ENCODE measurements at regions of chr12 and their contacts with region 1.

Region 1: DNA sequence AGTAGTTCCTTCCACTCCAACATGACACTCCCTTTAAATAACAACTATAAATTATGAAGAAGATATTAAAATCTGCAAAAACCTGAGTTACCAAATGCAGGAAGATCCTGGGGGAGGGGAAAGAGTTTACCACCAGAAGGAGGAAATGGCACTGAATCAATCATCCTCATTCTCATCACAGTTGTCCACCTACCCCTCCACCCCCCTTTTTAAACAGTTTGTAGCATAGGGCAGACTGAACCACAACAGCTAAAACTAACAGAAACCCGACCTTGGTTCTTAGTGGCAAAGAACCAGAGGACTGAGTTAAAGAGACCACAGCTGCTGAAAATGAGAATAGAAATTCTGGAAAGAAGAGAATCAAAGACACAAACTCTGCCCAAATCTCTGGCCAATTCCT is 189.5 kb downstream of the MED13L start:
- DNase-seq: no peak
- H3K4me3 Mint-ChIP-seq: no peak overlapping the region
- H3K27ac Mint-ChIP-seq: peak overlapping the region; percentile 19
- H3K4me1 Mint-ChIP-seq: peaks cover 48% of the 10 kb centered on the region
- H3K27me3 Mint-ChIP-seq: no peaks in the 10 kb centered on the region

Region 2: DNA sequence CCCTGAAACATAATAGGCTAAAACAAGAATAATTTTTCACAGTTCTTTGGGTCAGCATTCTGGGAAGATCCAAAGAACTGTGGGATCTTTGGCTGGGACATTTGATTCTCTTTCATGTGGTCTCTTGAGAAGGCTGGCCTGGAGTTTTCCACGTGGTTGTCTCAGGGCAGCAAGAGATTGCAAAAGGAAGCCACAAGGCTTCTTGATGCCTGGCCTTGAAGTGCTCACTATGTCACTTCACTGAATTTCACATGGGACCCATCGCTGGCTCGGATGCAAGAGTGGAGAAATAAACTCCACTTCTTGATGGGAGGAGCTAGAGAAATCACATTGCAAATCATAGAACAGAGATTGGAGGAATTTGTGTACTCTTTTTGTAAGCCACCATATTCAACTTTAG is 153.9 kb before region 1 on chr12:
- intact Hi-C with region 1: no loop called
- DNase-seq: no peak
- H3K4me3 Mint-ChIP-seq: no peak overlapping the region
- H3K27ac Mint-ChIP-seq: no peak overlapping the region
- H3K4me1 Mint-ChIP-seq: no peaks in the 10 kb centered on the region
- H3K27me3 Mint-ChIP-seq: peaks cover 17% of the 10 kb centered on the region

Region 3: DNA sequence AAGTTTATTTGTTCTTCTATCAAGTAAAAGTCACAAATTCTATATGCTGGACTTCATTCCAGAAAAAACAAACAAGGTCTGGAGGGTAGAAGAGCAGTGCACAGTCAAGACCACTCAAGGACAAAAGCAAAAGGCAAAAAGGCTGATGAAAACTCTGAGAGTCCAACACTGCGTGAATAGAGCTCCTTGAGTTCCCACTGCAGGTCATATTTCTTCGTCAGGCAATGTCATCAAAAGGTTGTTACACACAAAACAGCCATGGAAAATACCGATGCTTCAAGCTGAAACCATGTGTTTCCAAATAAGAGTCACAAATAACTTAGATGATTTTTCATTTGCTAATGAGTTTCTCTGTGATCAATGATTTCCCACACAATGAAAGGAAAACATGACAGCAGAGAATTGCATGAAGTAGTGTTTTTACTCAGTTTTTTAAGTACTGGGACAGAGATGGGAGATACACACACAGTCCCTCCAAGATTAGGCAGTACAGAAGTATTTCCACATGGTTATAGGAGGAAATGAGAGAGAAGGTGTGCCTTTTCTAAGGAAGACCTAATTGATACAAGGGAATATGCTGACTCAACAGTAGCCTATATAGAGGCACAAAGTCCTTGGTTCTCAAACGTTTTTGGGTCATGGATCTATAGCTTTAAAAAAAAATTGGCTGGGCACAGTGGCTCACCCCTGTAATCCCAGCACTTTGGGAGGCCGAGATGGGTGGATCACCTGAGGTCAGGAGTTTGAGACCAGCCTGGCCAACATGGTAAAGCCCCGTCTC is 11.9 kb after region 1 on chr12:
- intact Hi-C with region 1: loop called (anchors 1 kb)
- DNase-seq: no peak
- H3K4me3 Mint-ChIP-seq: no peak overlapping the region
- H3K27ac Mint-ChIP-seq: peak overlapping the region; percentile 64
- H3K4me1 Mint-ChIP-seq: peaks cover 24% of the 10 kb centered on the region
- H3K27me3 Mint-ChIP-seq: no peaks in the 10 kb centered on the region

Region 4: DNA sequence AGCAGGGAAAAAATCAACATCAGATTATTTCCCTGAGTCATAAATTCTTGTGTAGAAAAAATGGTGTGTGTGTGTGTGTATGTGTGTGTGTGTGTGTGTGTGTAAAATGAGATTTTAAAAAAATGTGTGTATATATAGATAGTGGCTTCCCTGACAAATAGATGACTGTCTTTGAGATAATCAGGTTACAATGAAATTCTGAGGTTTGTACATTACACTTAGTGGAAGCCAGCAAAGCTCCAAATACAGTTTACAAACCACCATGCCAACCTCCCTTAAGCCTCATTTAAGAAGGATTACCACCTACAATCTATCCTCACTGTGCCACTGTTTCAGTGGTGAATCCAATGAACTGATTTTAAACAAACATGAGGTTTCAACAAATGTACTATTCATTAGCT is 95.8 kb after region 1 on chr12:
- intact Hi-C with region 1: loop called (anchors 1 kb)
- DNase-seq: no peak
- H3K4me3 Mint-ChIP-seq: no peak overlapping the region
- H3K27ac Mint-ChIP-seq: no peak overlapping the region
- H3K4me1 Mint-ChIP-seq: peaks cover 58% of the 10 kb centered on the region
- H3K27me3 Mint-ChIP-seq: no peaks in the 10 kb centered on the region

Region 5: GRCh38 chr12:116673681-116674111 is 585.7 kb after region 1 on chr12:
- intact Hi-C with region 1: no loop called
- DNase-seq: no peak
- H3K4me3 Mint-ChIP-seq: peak overlapping the region; percentile 34
- H3K27ac Mint-ChIP-seq: peak overlapping the region; percentile 55
- H3K4me1 Mint-ChIP-seq: peaks cover 49% of the 10 kb centered on the region
- H3K27me3 Mint-ChIP-seq: no peaks in the 10 kb centered on the region